Natural killer cell (primary cell): ENCODE measurements at regions of chr1 and their contacts with region 1.

Region 1: GRCh38 chr1:205919026-205919746 is 24.1 kb downstream of the SLC26A9 start:
- DNase-seq: peak; percentile 54 to 78
- ATAC-seq: peak; percentile 64 to 87 (median 69)
- H3K4me3 ChIP-seq: no peak overlapping the region
- H3K4me3 Mint-ChIP-seq: no peak overlapping the region
- H3K27ac ChIP-seq: no peak overlapping the region
- H3K27ac Mint-ChIP-seq: no peak overlapping the region
- H3K4me1 ChIP-seq: peaks cover 7% of the 10 kb centered on the region
- H3K4me1 Mint-ChIP-seq: no peaks in the 10 kb centered on the region
- H3K27me3 ChIP-seq: no peaks in the 10 kb centered on the region
- H3K27me3 Mint-ChIP-seq: no peaks in the 10 kb centered on the region
- CTCF ChIP-seq: peak; percentile 72

Region 2: GRCh38 chr1:205284343-205285144 is 634.6 kb before region 1 on chr1:
- intact Hi-C with region 1: no loop called
- DNase-seq: peak; percentile 81 to 94
- ATAC-seq: peak; percentile 63 to 77 (median 66)
- H3K4me3 ChIP-seq: peak overlapping the region; percentile 26
- H3K4me3 Mint-ChIP-seq: peak overlapping the region; percentile 91
- H3K27ac ChIP-seq: peak overlapping the region; percentile 82
- H3K27ac Mint-ChIP-seq: peak overlapping the region; percentile 83 to 99
- H3K4me1 ChIP-seq: peaks cover 83% of the 10 kb centered on the region
- H3K4me1 Mint-ChIP-seq: peaks cover 73 to 82% of the 10 kb centered on the region in 2 donors
- H3K27me3 ChIP-seq: no peaks in the 10 kb centered on the region
- H3K27me3 Mint-ChIP-seq: no peaks in the 10 kb centered on the region
- CTCF ChIP-seq: no peak

Region 3: GRCh38 chr1:205791568-205792180 is 127.5 kb before region 1 on chr1:
- intact Hi-C with region 1: loop called (anchors 1 kb)
- DNase-seq: peak; percentile 46 to 80
- ATAC-seq: peak; percentile 73 to 90 (median 89)
- H3K4me3 ChIP-seq: no peak overlapping the region
- H3K4me3 Mint-ChIP-seq: no peak overlapping the region
- H3K27ac ChIP-seq: no peak overlapping the region
- H3K27ac Mint-ChIP-seq: no peak overlapping the region
- H3K4me1 ChIP-seq: no peaks in the 10 kb centered on the region
- H3K4me1 Mint-ChIP-seq: no peaks in the 10 kb centered on the region
- H3K27me3 ChIP-seq: no peaks in the 10 kb centered on the region
- H3K27me3 Mint-ChIP-seq: no peaks in the 10 kb centered on the region
- CTCF ChIP-seq: peak; percentile 69

Region 4: DNA sequence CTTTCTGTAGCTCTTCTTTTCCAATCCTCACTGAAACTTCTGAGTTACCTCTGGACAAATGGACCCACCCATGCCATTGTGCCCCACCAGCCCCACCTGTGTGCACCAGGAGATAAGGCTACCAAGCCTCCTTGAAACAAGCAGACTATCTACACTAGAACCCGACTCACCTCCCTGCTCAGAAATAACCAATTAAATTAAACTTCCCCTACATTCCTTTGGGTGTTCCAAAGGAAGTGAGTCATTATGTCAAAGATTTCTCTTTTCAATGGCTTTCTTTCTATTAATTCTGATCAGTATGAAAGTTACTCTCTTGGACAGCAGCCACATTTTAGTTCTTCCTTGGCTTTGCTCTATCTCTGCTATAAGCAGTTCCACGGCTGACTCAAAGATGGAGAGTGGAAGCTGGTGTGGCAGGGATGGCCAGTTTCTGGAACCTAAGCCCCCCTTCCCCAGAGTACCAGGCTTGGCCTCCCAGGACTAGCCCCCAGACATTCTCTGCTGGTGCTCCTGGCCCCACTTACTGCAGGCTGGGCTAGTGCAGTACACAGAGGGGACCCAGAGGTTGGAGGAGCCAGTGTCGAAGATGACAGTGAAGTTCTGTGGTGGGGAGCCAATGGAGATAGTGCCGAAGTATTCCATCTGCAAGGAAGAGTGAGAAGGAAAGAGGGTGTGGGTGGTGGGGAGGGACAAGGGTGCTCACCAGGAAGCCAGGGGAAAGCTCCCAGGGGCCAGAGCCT is 102.6 kb after region 1 on chr1:
- intact Hi-C with region 1: no loop called
- DNase-seq: no peak
- ATAC-seq: no peak
- H3K4me3 ChIP-seq: no peak overlapping the region
- H3K4me3 Mint-ChIP-seq: no peak overlapping the region
- H3K27ac ChIP-seq: no peak overlapping the region
- H3K27ac Mint-ChIP-seq: no peak overlapping the region
- H3K4me1 ChIP-seq: no peaks in the 10 kb centered on the region
- H3K4me1 Mint-ChIP-seq: no peaks in the 10 kb centered on the region
- H3K27me3 ChIP-seq: no peaks in the 10 kb centered on the region
- H3K27me3 Mint-ChIP-seq: peaks cover 12 to 16% of the 10 kb centered on the region in 2 donors
- CTCF ChIP-seq: no peak

Region 5: DNA sequence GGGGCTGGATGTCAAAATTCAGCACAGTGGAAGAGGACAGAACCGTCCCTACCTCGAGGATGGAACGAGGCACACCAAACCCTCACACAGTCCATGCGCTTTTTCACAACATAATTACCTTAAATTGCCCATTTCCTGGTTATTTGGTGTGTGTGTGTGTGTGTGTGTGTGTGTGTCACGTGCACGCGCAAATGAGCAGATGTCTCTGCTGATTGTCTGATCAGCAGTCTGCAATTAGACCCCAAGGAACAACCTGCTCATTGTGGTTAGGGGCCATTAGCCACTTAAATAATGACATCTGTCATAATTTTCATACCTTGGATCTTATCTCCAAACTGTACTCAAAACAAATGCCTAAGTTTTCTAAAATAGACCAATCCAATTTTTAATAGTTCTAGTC is 174.8 kb after region 1 on chr1:
- intact Hi-C with region 1: no loop called
- DNase-seq: no peak
- ATAC-seq: peak in 1 of 3 donors; percentile 32
- H3K4me3 ChIP-seq: no peak overlapping the region
- H3K4me3 Mint-ChIP-seq: no peak overlapping the region
- H3K27ac ChIP-seq: no peak overlapping the region
- H3K27ac Mint-ChIP-seq: no peak overlapping the region
- H3K4me1 ChIP-seq: no peaks in the 10 kb centered on the region
- H3K4me1 Mint-ChIP-seq: no peaks in the 10 kb centered on the region
- H3K27me3 ChIP-seq: no peaks in the 10 kb centered on the region
- H3K27me3 Mint-ChIP-seq: peaks cover 5 to 26% of the 10 kb centered on the region in 2 donors
- CTCF ChIP-seq: no peak

Region 6: DNA sequence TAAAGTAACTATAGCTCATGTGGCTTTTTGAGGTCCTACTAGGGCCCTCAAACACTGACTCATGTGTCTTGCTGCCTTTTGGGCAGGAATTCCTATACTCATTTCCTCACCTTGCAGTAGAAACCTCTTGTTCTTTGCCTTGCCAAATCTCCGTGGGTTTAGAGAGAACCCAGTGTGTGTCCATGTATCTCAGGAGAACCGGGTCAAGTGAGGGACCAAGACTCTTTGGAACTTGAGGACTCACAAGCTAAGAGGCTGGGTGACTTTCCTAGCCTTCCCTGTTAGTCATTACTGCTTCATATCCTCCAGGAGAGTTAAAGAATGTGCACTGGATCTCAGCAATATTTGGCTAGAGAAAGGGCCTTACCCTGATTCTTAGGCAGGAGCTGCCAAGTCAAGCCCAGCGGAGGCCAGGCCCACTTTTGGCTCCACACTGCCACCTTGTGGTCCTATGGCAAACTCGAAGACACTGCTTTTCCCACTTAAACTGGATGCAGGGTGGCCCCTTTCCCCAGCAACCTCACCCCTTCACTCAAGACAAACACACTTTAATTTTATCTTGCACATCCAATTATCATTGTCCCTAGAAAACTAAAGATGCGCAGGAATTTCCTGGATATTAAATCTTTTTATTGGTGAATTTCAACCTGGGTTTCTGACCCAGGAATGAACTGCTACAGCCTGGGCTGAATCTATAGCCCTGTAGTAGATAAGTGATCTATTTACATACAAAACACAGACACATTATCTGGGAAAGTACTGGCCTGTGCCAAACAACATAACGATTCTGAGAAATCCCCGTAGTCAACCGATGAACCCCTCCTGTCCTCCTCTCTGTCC is 187.4 kb after region 1 on chr1:
- intact Hi-C with region 1: loop called (anchors 1 kb)
- DNase-seq: peak; percentile 62 to 87
- ATAC-seq: peak; percentile 72 to 91 (median 83)
- H3K4me3 ChIP-seq: no peak overlapping the region
- H3K4me3 Mint-ChIP-seq: no peak overlapping the region
- H3K27ac ChIP-seq: no peak overlapping the region
- H3K27ac Mint-ChIP-seq: no peak overlapping the region
- H3K4me1 ChIP-seq: no peaks in the 10 kb centered on the region
- H3K4me1 Mint-ChIP-seq: no peaks in the 10 kb centered on the region
- H3K27me3 ChIP-seq: no peaks in the 10 kb centered on the region
- H3K27me3 Mint-ChIP-seq: peaks cover 8 to 12% of the 10 kb centered on the region in 2 donors
- CTCF ChIP-seq: peak; percentile 86